Mammary epithelial cell (primary cell): ENCODE measurements at regions of chr10 and their contacts with region 1.

Region 1: GRCh38 chr10:6667679-6668270 is 87.7 kb upstream of the PRKCQ start:
- DNase-seq: peak; percentile 37
- H3K4me3 ChIP-seq: no peak overlapping the region
- H3K27ac ChIP-seq: no peak overlapping the region
- H3K4me1 ChIP-seq: peaks cover 4% of the 10 kb centered on the region
- H3K27me3 ChIP-seq: peaks cover 2% of the 10 kb centered on the region
- CTCF ChIP-seq: peak; percentile 60 to 76

Region 2: GRCh38 chr10:6416892-6417512 is 250.8 kb before region 1 on chr10:
- CTCF ChIA-PET with region 1: interaction called, 3 read pairs
- dilution Hi-C with region 1: no loop called
- in situ Hi-C with region 1: loop called (anchors 10 kb)
- intact Hi-C with region 1: loop called (anchors 1 kb)
- DNase-seq: peak; percentile 31
- H3K4me3 ChIP-seq: no peak overlapping the region
- H3K27ac ChIP-seq: no peak overlapping the region
- H3K4me1 ChIP-seq: no peaks in the 10 kb centered on the region
- H3K27me3 ChIP-seq: no peaks in the 10 kb centered on the region
- CTCF ChIP-seq: peak; percentile 64 to 70

Region 3: GRCh38 chr10:6423004-6423403 is 244.8 kb before region 1 on chr10:
- CTCF ChIA-PET with region 1: interaction called, 3 read pairs
- dilution Hi-C with region 1: no loop called
- in situ Hi-C with region 1: loop called (anchors 10 kb)
- intact Hi-C with region 1: no loop called
- DNase-seq: peak; percentile 83
- H3K4me3 ChIP-seq: no peak overlapping the region
- H3K27ac ChIP-seq: no peak overlapping the region
- H3K4me1 ChIP-seq: peaks cover 8% of the 10 kb centered on the region
- H3K27me3 ChIP-seq: no peaks in the 10 kb centered on the region
- CTCF ChIP-seq: no peak

Region 4: GRCh38 chr10:6445501-6446316 is 222.1 kb before region 1 on chr10:
- CTCF ChIA-PET with region 1: no interaction called
- dilution Hi-C with region 1: no loop called
- in situ Hi-C with region 1: no loop called
- intact Hi-C with region 1: loop called (anchors 1 kb)
- DNase-seq: peak; percentile 36
- H3K4me3 ChIP-seq: no peak overlapping the region
- H3K27ac ChIP-seq: no peak overlapping the region
- H3K4me1 ChIP-seq: no peaks in the 10 kb centered on the region
- H3K27me3 ChIP-seq: no peaks in the 10 kb centered on the region
- CTCF ChIP-seq: peak; percentile 55 to 61

Region 5: GRCh38 chr10:6593241-6593671 is 74.5 kb before region 1 on chr10:
- CTCF ChIA-PET with region 1: no interaction called
- dilution Hi-C with region 1: no loop called
- in situ Hi-C with region 1: no loop called
- intact Hi-C with region 1: no loop called
- DNase-seq: peak; percentile 64
- H3K4me3 ChIP-seq: no peak overlapping the region
- H3K27ac ChIP-seq: no peak overlapping the region
- H3K4me1 ChIP-seq: peaks cover 15% of the 10 kb centered on the region
- H3K27me3 ChIP-seq: no peaks in the 10 kb centered on the region
- CTCF ChIP-seq: no peak

Region 6: DNA sequence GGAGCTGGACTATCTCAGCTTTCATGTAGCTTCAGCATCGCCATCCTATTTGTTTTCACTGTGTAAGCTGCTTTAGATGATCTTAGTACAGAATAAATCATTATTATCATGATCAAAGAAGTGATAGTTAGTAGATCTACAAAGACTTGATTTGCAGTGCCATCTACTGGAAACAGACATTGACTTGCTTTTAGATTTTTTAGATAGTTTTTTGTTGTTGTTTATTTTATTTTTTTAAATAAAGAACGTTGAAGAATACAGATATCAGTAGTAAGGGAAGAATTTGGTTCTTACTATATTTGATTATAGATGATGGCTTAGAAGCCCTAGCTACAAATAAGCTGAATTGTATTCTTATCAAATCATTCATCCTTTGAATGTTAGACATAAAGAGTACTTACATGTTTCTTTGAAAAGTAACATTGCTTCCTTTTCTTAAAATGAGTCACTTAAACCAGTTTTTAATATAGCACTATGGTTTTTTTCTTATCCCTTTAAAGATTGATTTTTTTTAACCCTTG is 749.4 kb after region 1 on chr10:
- CTCF ChIA-PET with region 1: interaction called, 21 read pairs
- dilution Hi-C with region 1: no loop called
- in situ Hi-C with region 1: loop called in 1 of 2 experiments (anchors 10 kb)
- intact Hi-C with region 1: loop called (anchors 1 kb)
- DNase-seq: no peak
- H3K4me3 ChIP-seq: no peak overlapping the region
- H3K27ac ChIP-seq: no peak overlapping the region
- H3K4me1 ChIP-seq: no peaks in the 10 kb centered on the region
- H3K27me3 ChIP-seq: peaks cover 16% of the 10 kb centered on the region
- CTCF ChIP-seq: peak in 1 of 2 donors; percentile 48